IMR-90 (cell line): ENCODE measurements at regions of chr19 and their contacts with region 1.

Region 1: GRCh38 chr19:34178274-34178610 is 5.9 kb downstream of the LSM14A start:
- DNase-seq: no peak
- ATAC-seq: no peak
- H3K4me3 ChIP-seq: no peak overlapping the region
- H3K27ac ChIP-seq: no peak overlapping the region
- H3K4me1 ChIP-seq: peaks cover 11% of the 10 kb centered on the region
- H3K27me3 ChIP-seq: no peaks in the 10 kb centered on the region
- CTCF ChIP-seq: no peak
- POLR2A ChIP-seq: no peak
- RAD21 ChIP-seq: no peak

Region 2: DNA sequence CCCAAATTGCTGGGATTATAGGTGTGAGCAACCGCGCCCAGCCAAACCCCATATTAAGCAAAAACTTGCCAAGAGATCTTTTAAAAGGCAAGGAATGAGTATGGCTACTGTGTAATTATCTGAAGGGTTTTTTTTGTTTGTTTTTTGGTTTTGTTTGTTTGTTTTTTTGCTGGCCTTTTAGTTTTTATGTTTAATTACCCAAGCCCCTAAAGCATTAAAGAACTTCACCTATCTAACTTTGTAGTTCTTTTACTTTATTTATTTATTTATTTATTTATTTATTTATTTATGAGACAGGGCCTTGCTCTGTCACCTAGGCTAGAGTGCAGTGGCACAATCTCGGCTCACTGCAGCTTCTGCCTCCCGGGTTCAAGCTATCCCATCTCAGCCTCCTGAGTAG is 35.8 kb after region 1 on chr19:
- CTCF ChIA-PET with region 1: interaction called, 3 read pairs
- POLR2A ChIA-PET with region 1: no interaction called
- dilution Hi-C with region 1: no loop called
- in situ Hi-C with region 1: no loop called
- intact Hi-C with region 1: loop called (anchors 5 kb)
- DNase-seq: no peak
- ATAC-seq: no peak
- H3K4me3 ChIP-seq: no peak overlapping the region
- H3K27ac ChIP-seq: no peak overlapping the region
- H3K4me1 ChIP-seq: peaks cover 5% of the 10 kb centered on the region
- H3K27me3 ChIP-seq: no peaks in the 10 kb centered on the region
- CTCF ChIP-seq: no peak
- POLR2A ChIP-seq: no peak
- RAD21 ChIP-seq: no peak